ENCODE measurements at regions of chr14 and their contacts with region 1.

Region 1: DNA sequence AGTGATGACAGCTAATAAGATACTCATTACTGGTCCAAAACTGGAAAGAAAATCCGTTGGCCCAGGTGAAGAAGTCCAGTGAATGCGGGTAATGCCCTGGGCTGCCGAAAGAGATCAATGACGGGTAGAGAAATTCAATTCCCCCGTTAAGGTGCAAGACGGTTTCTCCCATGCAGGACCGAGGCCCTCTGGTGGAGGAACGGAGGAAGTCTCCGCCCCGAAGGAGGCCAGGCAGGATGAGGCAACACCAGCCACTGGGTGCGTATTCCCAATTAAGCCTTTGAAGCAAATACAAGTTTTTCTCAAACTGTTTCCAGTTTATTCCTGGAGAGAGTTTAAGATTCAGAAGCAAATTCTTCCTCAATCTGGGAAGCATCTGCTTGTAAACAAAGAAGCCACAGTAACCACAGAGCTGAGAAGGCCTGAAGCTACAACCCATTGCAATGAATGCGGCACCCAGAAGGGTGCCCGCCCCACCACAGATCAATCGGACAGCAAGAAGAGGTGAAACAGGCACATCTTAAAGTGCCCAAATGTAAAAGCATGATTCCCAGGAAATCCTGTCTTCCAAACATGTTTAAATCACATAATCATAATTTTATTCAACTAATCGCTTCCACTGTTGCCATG is 118.5 kb downstream of the TTC7B start:
- DNase-seq: peak; percentile 79 to 85
- H3K4me3 ChIP-seq: no peak overlapping the region
- H3K4me3 Mint-ChIP-seq: no peak overlapping the region
- H3K27ac Mint-ChIP-seq: peak overlapping the region; percentile 55
- H3K4me1 ChIP-seq: no peaks in the 10 kb centered on the region
- H3K4me1 Mint-ChIP-seq: peaks cover 6% of the 10 kb centered on the region
- H3K27me3 ChIP-seq: no peaks in the 10 kb centered on the region
- H3K27me3 Mint-ChIP-seq: no peaks in the 10 kb centered on the region
- CTCF ChIP-seq: peak; percentile 80 to 93

Region 2: GRCh38 chr14:90288651-90289355 is 408.9 kb before region 1 on chr14:
- CTCF ChIA-PET with region 1: interaction called, 7 read pairs
- POLR2A ChIA-PET with region 1: no interaction called
- intact Hi-C with region 1: loop called (anchors 5 kb)
- DNase-seq: no peak
- H3K4me3 ChIP-seq: no peak overlapping the region
- H3K4me3 Mint-ChIP-seq: no peak overlapping the region
- H3K27ac Mint-ChIP-seq: no peak overlapping the region
- H3K4me1 ChIP-seq: no peaks in the 10 kb centered on the region
- H3K4me1 Mint-ChIP-seq: no peaks in the 10 kb centered on the region
- H3K27me3 ChIP-seq: no peaks in the 10 kb centered on the region
- H3K27me3 Mint-ChIP-seq: no peaks in the 10 kb centered on the region
- CTCF ChIP-seq: no peak

Region 3: GRCh38 chr14:90301668-90302090 is 396.0 kb before region 1 on chr14:
- CTCF ChIA-PET with region 1: no interaction called
- POLR2A ChIA-PET with region 1: interaction called, 3 read pairs
- intact Hi-C with region 1: loop called (anchors 2 kb)
- DNase-seq: peak in 1 of 2 experiments; percentile 11
- H3K4me3 ChIP-seq: no peak overlapping the region
- H3K4me3 Mint-ChIP-seq: no peak overlapping the region
- H3K27ac Mint-ChIP-seq: no peak overlapping the region
- H3K4me1 ChIP-seq: no peaks in the 10 kb centered on the region
- H3K4me1 Mint-ChIP-seq: no peaks in the 10 kb centered on the region
- H3K27me3 ChIP-seq: no peaks in the 10 kb centered on the region
- H3K27me3 Mint-ChIP-seq: no peaks in the 10 kb centered on the region
- CTCF ChIP-seq: peak in 1 of 2 experiments; percentile 38

Region 4: DNA sequence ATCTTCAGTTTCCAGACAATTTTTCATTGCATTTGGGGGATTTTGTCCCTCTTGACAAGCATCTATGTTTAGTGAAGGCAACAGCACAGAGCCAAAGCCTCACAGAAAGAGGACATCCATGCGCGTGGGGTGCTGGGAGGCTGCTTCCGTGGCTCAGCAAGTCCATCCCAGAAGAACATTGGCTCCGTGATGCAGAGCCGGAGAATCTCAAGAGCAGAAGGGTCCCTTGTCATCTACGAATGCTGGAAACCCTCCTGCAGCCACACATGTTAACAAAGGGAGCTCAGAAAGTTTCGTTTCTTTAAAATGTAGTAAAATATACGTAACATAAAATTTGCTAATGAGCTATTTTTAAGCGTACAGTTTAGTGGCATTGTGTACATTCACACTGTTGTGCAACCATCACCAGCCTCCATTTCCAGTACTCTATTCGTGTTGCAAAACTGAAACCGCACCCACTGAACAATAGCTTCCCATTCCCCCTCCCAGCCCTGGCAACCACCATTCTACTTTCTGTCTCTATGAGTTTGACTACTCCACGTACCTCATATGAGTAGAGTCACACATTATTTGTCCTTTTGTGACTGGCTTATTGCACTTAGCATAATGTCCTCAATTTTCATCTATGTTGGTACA is 67.4 kb before region 1 on chr14:
- CTCF ChIA-PET with region 1: no interaction called
- POLR2A ChIA-PET with region 1: no interaction called
- intact Hi-C with region 1: no loop called
- DNase-seq: no peak
- H3K4me3 ChIP-seq: no peak overlapping the region
- H3K4me3 Mint-ChIP-seq: no peak overlapping the region
- H3K27ac Mint-ChIP-seq: no peak overlapping the region
- H3K4me1 ChIP-seq: no peaks in the 10 kb centered on the region
- H3K4me1 Mint-ChIP-seq: no peaks in the 10 kb centered on the region
- H3K27me3 ChIP-seq: no peaks in the 10 kb centered on the region
- H3K27me3 Mint-ChIP-seq: no peaks in the 10 kb centered on the region
- CTCF ChIP-seq: no peak

Region 5: GRCh38 chr14:90758028-90758889 is 60.6 kb after region 1 on chr14:
- CTCF ChIA-PET with region 1: interaction called, 4 read pairs
- POLR2A ChIA-PET with region 1: no interaction called
- intact Hi-C with region 1: loop called (anchors 2 kb)
- DNase-seq: peak; percentile 86 to 95
- H3K4me3 ChIP-seq: peak overlapping the region; percentile 40
- H3K4me3 Mint-ChIP-seq: peak overlapping the region; percentile 68
- H3K27ac Mint-ChIP-seq: no peak overlapping the region
- H3K4me1 ChIP-seq: no peaks in the 10 kb centered on the region
- H3K4me1 Mint-ChIP-seq: no peaks in the 10 kb centered on the region
- H3K27me3 ChIP-seq: no peaks in the 10 kb centered on the region
- H3K27me3 Mint-ChIP-seq: no peaks in the 10 kb centered on the region
- CTCF ChIP-seq: peak; percentile 77 to 88